HepG2 (cell line): ENCODE measurements at regions of chr16 and their contacts with region 1.

Region 1: DNA sequence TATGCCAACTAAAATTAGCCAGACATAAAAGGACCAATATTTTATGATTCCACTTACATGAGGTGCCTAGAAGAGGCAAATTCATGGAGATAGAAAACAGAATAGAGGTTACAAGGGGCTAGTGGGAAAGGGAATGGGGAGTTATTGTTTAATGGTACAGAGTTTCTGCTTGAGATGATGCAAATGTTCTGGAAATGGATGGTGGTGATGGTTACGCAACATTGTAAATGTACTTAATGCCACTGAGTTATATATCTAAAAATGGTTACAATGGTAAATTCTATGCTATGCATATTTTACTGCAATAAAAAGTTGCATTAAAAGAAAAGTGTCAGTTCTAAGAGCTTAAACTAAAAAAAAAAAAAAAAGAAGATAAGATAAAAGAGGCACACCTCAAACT is 17.9 kb downstream of the MT1X start:
- DNase-seq: no peak
- ATAC-seq: no peak
- H3K4me3 ChIP-seq: no peak overlapping the region
- H3K27ac ChIP-seq: no peak overlapping the region
- H3K4me1 ChIP-seq: peaks cover 8% of the 10 kb centered on the region; the same call in 1 of the 2 replicates
- H3K27me3 ChIP-seq: peaks cover 0 to 12% of the 10 kb centered on the region in 2 experiments; a peak in 2 of 5 replicates
- CTCF ChIP-seq: no peak
- EP300 ChIP-seq: no peak
- POLR2A ChIP-seq: no peak
- RAD21 ChIP-seq: no peak

Region 2: GRCh38 chr16:56332464-56333079 is 367.6 kb before region 1 on chr16:
- CTCF ChIA-PET with region 1: no interaction called
- POLR2A ChIA-PET with region 1: no interaction called
- in situ Hi-C with region 1: no loop called
- intact Hi-C with region 1: loop called (anchors 1 kb)
- DNase-seq: peak; percentile 78
- ATAC-seq: peak; percentile 93
- H3K4me3 ChIP-seq: no peak overlapping the region
- H3K27ac ChIP-seq: no peak overlapping the region
- H3K4me1 ChIP-seq: no peaks in the 10 kb centered on the region
- H3K27me3 ChIP-seq: peaks cover 5 to 69% of the 10 kb centered on the region in 2 experiments; a peak in 4 of 5 replicates
- CTCF ChIP-seq: peak; percentile 99
- EP300 ChIP-seq: no peak
- POLR2A ChIP-seq: no peak
- RAD21 ChIP-seq: peak; percentile 95

Region 3: GRCh38 chr16:56576585-56577293 is 123.5 kb before region 1 on chr16:
- CTCF ChIA-PET with region 1: interaction called, 15 read pairs
- POLR2A ChIA-PET with region 1: no interaction called
- in situ Hi-C with region 1: loop called (anchors 5 kb)
- intact Hi-C with region 1: loop called (anchors 1 kb)
- DNase-seq: peak; percentile 69
- ATAC-seq: peak; percentile 100
- H3K4me3 ChIP-seq: no peak overlapping the region
- H3K27ac ChIP-seq: no peak overlapping the region
- H3K4me1 ChIP-seq: no peaks in the 10 kb centered on the region
- H3K27me3 ChIP-seq: peaks cover 0 to 3% of the 10 kb centered on the region in 2 experiments; a peak in 2 of 5 replicates
- CTCF ChIP-seq: peak; percentile 99
- EP300 ChIP-seq: no peak
- POLR2A ChIP-seq: no peak
- RAD21 ChIP-seq: peak; percentile 93

Region 4: GRCh38 chr16:56608043-56608875 is 91.9 kb before region 1 on chr16 and contains the start of gene MT2A:
- CTCF ChIA-PET with region 1: interaction called, 28 read pairs
- POLR2A ChIA-PET with region 1: interaction called, 12 read pairs
- in situ Hi-C with region 1: loop called (anchors 5 kb)
- intact Hi-C with region 1: loop called (anchors 1 kb)
- DNase-seq: peak; percentile 94
- ATAC-seq: peak; percentile 76
- H3K4me3 ChIP-seq: peak within 1 kb of the TSS; percentile 75 to 84 (median 78)
- H3K27ac ChIP-seq: peak within 1 kb of the TSS; percentile 93
- H3K4me1 ChIP-seq: peaks cover 72% of the 10 kb centered on the region
- H3K27me3 ChIP-seq: no peaks in the 10 kb centered on the region; a peak in 1 of 5 replicates
- CTCF ChIP-seq: peak; percentile 23
- EP300 ChIP-seq: peak in 1 of 2 experiments; percentile 22; a peak in 2 of 4 replicates
- POLR2A ChIP-seq: peak; percentile 87 to 89
- RAD21 ChIP-seq: peak; percentile 73
- total RNA-seq, gene MT2A: 371 and 409 TPM in 2 replicates

Region 5: DNA sequence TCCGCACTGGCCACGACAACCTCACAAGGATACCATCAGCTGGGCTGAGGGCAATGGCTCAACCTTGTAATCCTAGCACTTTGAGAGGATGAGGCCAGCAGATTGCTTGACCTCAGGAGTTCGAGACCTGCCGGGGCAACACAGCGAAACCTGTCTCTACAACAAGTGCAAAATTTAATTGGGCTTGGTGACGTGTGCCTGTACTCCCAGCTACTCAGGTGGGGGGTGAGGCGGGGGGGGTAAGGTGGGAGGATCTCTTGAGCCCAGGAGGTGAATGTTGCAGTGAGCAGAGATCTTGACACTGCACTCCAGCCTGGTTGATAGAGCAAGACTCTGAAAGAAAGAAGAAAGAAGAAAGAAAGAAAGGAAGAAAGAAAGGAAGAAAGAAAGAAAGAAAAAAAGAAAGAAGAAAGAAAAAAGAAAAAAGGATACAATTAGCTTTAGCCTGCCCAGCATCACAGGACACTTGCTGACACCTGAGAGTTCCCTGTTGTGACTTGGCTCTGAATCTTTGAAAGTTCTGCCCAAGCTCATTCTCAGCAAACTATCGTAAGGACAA is 79.8 kb before region 1 on chr16:
- CTCF ChIA-PET with region 1: no interaction called
- POLR2A ChIA-PET with region 1: no interaction called
- in situ Hi-C with region 1: no loop called
- intact Hi-C with region 1: no loop called
- DNase-seq: no peak
- ATAC-seq: no peak
- H3K4me3 ChIP-seq: no peak overlapping the region
- H3K27ac ChIP-seq: no peak overlapping the region
- H3K4me1 ChIP-seq: peaks cover 32% of the 10 kb centered on the region
- H3K27me3 ChIP-seq: peaks cover 11 to 46% of the 10 kb centered on the region in 2 experiments; a peak in 4 of 5 replicates
- CTCF ChIP-seq: no peak
- EP300 ChIP-seq: no peak
- POLR2A ChIP-seq: no peak
- RAD21 ChIP-seq: no peak

Region 6: GRCh38 chr16:56673921-56674320 is 26.3 kb before region 1 on chr16:
- CTCF ChIA-PET with region 1: interaction called, 36 read pairs
- POLR2A ChIA-PET with region 1: no interaction called
- in situ Hi-C with region 1: no loop called
- intact Hi-C with region 1: loop called (anchors 1 kb)
- DNase-seq: peak; percentile 47
- ATAC-seq: peak; percentile 75
- H3K4me3 ChIP-seq: no peak overlapping the region
- H3K27ac ChIP-seq: no peak overlapping the region
- H3K4me1 ChIP-seq: 0 out of 2 replicates have a peak, but pooled peaks cover 3% of the 10 kb centered on the region
- H3K27me3 ChIP-seq: peaks cover 6 to 49% of the 10 kb centered on the region in 2 experiments
- CTCF ChIP-seq: peak; percentile 83
- EP300 ChIP-seq: no peak
- POLR2A ChIP-seq: no peak
- RAD21 ChIP-seq: peak; percentile 79